HEK293 (cell line): ENCODE measurements at regions of chr1 and their contacts with region 1.

Region 1: DNA sequence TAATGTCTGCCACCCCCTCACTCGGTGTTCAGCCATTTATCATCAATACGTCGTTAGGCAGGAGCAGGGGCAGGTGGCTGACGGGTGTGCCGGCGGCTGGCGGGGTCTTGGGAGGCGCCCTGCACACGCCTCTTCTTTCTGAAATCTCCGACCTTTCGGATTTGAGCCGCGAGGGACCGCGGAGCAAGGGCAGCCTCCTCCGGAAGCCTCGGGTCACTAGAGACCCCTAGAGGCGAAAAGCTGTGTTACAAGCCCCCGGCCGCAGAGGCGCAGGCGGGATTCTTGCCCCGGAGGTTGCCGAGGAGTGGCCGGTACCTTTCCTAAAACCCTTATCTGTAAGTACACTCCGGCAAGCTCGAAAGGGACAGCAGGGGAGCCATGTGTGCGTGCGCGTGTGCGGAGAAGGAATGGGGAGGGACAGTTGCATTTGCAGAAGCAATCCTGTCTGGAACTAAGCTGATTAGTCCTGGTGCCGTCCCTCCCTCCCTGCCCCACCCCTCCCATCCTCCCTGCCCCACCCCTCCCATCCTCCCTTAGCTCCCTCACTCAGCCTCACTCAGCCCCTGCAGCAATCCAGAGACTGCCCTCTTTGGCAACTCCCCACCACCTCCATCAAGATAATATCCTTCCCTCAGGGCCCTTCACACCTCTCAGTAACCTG is 11.0 kb downstream of the BRINP2 start:
- H3K4me3 ChIP-seq: peak overlapping the region; percentile 35
- H3K27ac ChIP-seq: peak overlapping the region; percentile 39; the same call in 1 of the 2 replicates
- H3K4me1 ChIP-seq: peaks cover 3% of the 10 kb centered on the region; the same call in 1 of the 2 replicates
- CTCF ChIP-seq: peak; percentile 93

Region 2: GRCh38 chr1:176949033-176949662 is 232.6 kb before region 1 on chr1:
- CTCF ChIA-PET with region 1: interaction called, 11 read pairs
- POLR2A ChIA-PET with region 1: interaction called, 3 read pairs
- H3K4me3 ChIP-seq: no peak overlapping the region
- H3K27ac ChIP-seq: no peak overlapping the region
- H3K4me1 ChIP-seq: no peaks in the 10 kb centered on the region
- CTCF ChIP-seq: peak; percentile 52; the same call in 1 of the 2 replicates

Region 3: DNA sequence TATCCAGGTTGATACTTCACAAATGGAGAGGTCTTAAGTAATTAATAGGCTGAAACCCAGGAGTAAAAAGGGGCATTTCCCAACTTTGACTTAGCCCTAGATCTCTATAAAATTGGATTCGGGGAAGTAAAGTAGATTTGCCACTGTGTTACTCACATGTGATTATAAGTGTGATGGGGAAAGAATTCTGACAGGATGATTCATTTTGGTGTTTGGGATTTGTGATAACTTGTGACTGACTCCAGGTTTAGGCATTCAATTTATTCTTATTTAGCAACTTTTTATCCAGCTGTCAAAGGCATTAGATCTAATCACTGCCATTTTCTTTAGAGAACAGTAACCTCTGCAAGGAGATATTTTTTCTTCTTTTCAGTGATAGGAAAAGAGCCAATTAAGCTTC is 192.7 kb before region 1 on chr1:
- CTCF ChIA-PET with region 1: no interaction called
- POLR2A ChIA-PET with region 1: no interaction called
- H3K4me3 ChIP-seq: no peak overlapping the region
- H3K27ac ChIP-seq: no peak overlapping the region
- H3K4me1 ChIP-seq: no peaks in the 10 kb centered on the region
- CTCF ChIP-seq: no peak

Region 4: DNA sequence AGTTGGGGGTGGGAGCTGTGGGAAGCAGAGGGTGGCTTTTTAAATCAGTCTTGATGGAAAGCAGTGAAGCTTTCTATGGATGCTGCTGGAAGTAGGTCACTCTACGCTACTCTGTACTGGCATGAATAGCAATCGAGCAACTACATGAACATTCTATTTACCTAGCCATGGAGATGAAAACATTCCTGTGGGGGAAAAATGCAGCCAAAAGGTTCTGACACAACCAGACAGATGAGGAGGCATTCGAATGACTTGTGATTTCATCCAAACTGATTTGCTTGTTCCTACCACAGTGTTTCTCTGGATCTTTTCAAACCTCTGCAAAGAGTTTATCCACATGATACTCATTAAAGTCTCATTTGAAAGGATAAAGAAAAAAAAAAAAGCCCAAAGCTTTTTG is 112.3 kb before region 1 on chr1:
- CTCF ChIA-PET with region 1: no interaction called
- POLR2A ChIA-PET with region 1: no interaction called
- H3K4me3 ChIP-seq: no peak overlapping the region
- H3K27ac ChIP-seq: no peak overlapping the region
- H3K4me1 ChIP-seq: peaks cover 7% of the 10 kb centered on the region; the same call in 1 of the 2 replicates
- CTCF ChIP-seq: no peak

Region 5: GRCh38 chr1:177164380-177165068 is 17.2 kb before region 1 on chr1 and contains the start of gene ASTN1:
- CTCF ChIA-PET with region 1: interaction called, 11 read pairs
- POLR2A ChIA-PET with region 1: no interaction called
- H3K4me3 ChIP-seq: peak within 1 kb of the TSS; percentile 53
- H3K27ac ChIP-seq: no peak within 1 kb of the TSS; the same call in 1 of the 2 replicates
- H3K4me1 ChIP-seq: no peaks in the 10 kb centered on the region
- CTCF ChIP-seq: peak; percentile 35; the same call in 1 of the 2 replicates

Region 6: GRCh38 chr1:177170756-177171535 is 10.8 kb before region 1 on chr1 and contains the start of gene BRINP2:
- CTCF ChIA-PET with region 1: interaction called, 30 read pairs
- POLR2A ChIA-PET with region 1: interaction called, 10 read pairs
- H3K4me3 ChIP-seq: peak within 1 kb of the TSS; percentile 46
- H3K27ac ChIP-seq: no peak within 1 kb of the TSS
- H3K4me1 ChIP-seq: peaks cover 4% of the 10 kb centered on the region
- CTCF ChIP-seq: no peak

Region 7: GRCh38 chr1:177256153-177257075 is 74.7 kb after region 1 on chr1:
- CTCF ChIA-PET with region 1: interaction called, 11 read pairs
- POLR2A ChIA-PET with region 1: interaction called, 14 read pairs
- H3K4me3 ChIP-seq: no peak overlapping the region
- H3K27ac ChIP-seq: peak overlapping the region; percentile 85
- H3K4me1 ChIP-seq: peaks cover 19% of the 10 kb centered on the region
- CTCF ChIP-seq: peak; percentile 78